Activated CD4-positive, alpha-beta T cell treated with anti-CD3 and anti-CD28 coated beads, Interleukin-2, amount 10 ng/mL, durations not matched to agents 24 days and 14 days (primary cell): ENCODE measurements at regions of chr2 and their contacts with region 1.

Region 1: GRCh38 chr2:74152954-74153353 is 5.2 kb upstream of the BOLA3 start:
- DNase-seq: no peak
- H3K4me3 Mint-ChIP-seq: no peak overlapping the region
- H3K27ac Mint-ChIP-seq: no peak overlapping the region
- H3K4me1 Mint-ChIP-seq: peaks cover 5% of the 10 kb centered on the region
- H3K27me3 Mint-ChIP-seq: no peaks in the 10 kb centered on the region

Region 2: DNA sequence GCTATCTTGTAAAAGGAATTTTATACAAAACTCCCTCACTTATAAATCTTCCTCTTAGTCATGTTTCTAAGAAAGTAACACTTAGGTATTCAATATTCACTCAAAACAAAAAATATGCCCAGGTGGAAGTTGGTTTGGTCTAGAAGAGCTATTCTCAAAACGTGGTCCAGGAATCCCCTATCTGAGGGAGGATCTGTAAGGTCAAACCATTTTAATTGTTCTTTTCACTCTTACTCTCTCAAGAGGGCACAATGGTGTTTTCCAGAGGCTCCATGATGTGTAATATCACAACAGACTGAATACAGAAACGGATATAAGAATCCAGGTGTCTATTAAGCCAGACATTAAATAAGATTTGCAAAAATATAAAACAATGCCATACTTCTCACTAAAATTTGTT is 15.8 kb after region 1 on chr2:
- intact Hi-C with region 1: loop called (anchors 2 kb)
- DNase-seq: no peak
- H3K4me3 Mint-ChIP-seq: no peak overlapping the region
- H3K27ac Mint-ChIP-seq: peak overlapping the region; percentile 56
- H3K4me1 Mint-ChIP-seq: peaks cover 21% of the 10 kb centered on the region
- H3K27me3 Mint-ChIP-seq: no peaks in the 10 kb centered on the region

Region 3: DNA sequence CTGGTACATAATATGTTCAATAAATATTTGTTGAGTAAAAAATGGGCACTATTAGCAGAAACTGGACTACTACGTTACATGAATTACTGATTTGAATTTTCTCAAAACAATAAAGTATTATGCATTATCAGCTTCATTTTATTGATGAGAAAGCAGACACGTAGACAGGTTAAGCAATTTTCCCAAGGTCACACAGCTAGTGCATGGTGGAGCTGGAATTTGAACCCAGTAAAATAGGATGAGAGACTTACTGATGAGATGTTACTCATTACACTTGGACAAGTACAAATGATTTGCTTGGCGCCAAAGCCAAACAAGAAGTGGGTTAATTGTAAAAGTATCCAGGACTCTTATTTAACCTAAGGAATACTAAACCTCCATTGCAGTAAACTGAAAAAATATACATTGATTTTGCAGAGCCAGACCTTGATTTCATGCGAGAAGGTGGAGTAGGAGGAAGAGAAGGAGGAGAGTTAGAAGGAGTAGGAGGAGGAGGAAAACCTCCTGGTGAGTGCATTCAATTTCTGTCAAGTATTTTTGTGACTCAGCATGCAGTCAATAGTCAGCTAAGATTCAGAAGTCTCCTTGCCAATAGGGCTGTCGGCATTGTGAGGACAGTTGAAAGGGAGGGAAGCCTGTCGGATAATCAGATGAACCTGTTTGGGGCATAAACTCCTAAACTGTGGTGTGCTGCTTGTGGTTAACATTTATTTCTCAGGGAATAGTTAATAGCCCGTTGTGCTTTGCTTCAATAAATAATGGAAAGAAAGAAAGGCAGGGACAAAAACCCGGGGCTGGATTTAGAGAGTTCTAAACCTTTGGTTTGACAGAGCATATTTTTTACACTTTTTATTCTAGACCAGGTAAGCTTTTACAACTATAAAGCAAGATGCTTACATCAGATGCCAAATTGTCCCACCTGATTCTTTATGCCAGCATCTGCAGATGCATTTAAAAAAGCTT is 1123.4 kb after region 1 on chr2:
- intact Hi-C with region 1: no loop called
- DNase-seq: no peak
- H3K4me3 Mint-ChIP-seq: no peak overlapping the region
- H3K27ac Mint-ChIP-seq: no peak overlapping the region
- H3K4me1 Mint-ChIP-seq: no peaks in the 10 kb centered on the region
- H3K27me3 Mint-ChIP-seq: no peaks in the 10 kb centered on the region